Lower lobe of right lung (tissue), 2 donors: ENCODE measurements at regions of chr12 and their contacts with region 1.

Region 1: GRCh38 chr12:84874125-84874824 is 38.3 kb downstream of the SLC6A15 start:
- DNase-seq: no peak
- ATAC-seq: peak; percentile 43 to 76
- H3K4me3 ChIP-seq: no peak overlapping the region
- H3K27ac ChIP-seq: no peak overlapping the region
- H3K4me1 ChIP-seq: no peaks in the 10 kb centered on the region
- H3K27me3 ChIP-seq: no peaks in the 10 kb centered on the region
- CTCF ChIP-seq: peak; percentile 75

Region 2: DNA sequence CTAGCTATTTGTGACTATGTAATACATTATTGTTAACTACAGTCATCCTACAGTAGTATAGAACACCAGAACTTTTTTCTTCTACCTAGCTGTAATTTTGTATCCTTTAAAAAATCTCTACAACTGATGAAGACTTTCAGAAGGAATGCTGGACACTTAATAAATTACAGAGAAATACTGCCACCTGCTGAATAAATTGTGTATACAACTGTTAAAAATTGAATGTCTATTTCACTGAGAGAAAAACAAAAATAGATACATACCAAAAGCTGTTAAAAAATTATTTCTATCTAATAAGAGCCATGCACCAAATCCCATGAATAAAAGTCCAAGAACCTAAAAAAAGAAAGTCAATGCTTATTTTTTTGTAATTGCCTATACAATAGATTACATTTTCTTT is 155.2 kb after region 1 on chr12:
- intact Hi-C with region 1: loop called (anchors 10 kb)
- DNase-seq: no peak
- ATAC-seq: no peak
- H3K4me3 ChIP-seq: no peak overlapping the region
- H3K27ac ChIP-seq: no peak overlapping the region
- H3K4me1 ChIP-seq: no peaks in the 10 kb centered on the region
- H3K27me3 ChIP-seq: no peaks in the 10 kb centered on the region
- CTCF ChIP-seq: peak; percentile 48